Breast epithelium (tissue), 4 donors: ENCODE measurements at regions of chr11 and their contacts with region 1.

Region 1: DNA sequence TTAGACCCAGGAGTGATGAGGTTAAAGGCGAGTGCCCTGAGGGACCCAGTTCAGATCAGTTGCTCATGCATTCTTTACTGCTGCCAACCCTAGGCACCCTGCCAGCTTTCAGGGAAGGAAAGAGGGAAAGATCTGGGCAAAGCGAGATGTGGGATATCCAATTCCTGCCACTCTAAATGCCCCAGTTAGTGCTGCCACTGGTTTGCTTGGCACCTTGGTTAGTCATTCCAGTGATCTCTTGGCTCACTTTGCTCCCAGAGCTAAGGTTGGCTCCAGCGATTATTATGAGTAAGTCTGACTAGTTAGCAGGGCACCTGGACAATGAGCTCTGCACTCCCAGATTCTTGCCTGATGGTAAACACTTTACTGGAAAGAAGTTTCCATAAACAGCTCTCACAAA is 85.0 kb downstream of the INSC start:
- DNase-seq: peak; percentile 27 to 66
- H3K4me3 ChIP-seq: no peak overlapping the region
- H3K27ac ChIP-seq: no peak overlapping the region
- H3K4me1 ChIP-seq: no peaks in the 10 kb centered on the region
- H3K27me3 ChIP-seq: no peaks in the 10 kb centered on the region
- CTCF ChIP-seq: no peak
- POLR2A ChIP-seq: no peak

Region 2: DNA sequence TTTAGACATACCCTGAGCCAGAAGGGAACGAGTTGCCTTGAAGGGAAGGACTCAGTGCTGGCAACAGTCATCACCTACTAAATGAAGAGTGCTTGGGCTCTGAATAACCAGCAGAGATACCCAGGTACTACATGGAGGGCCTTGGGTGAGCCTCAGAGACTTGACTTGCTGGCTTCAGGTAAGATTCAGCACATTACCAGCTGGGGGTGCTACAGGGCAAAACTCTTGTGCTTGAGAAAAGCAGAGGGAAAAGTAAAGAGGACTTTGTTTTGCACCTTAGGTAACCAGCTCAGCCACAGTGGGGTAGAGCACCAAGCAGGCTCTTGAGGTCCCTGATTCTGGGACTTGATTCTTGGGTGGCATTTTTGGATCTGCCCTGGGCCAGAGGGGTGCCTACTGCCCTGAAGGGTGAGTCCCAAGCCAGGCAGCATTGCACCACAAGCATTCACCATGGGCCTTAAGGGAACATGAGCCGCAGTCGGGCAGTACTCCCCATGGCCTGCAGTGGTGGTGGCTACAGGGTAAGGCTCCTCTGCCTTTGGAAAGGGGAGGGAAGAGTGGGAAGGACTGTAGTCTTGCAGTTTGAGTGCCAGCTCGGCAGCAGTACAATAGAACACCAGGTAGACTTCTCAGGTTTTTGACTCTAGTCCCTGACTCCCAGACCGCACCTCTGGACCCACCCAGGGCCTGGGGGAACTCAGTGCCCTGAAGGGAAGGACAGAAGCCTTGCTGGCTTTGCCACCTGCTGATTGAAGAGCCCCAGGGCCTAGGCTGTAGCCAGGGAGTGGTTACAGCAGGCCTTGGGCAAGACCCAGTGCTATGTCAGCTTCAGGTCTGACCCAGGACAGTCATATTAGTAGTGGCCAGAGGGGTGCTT is 1837.2 kb after region 1 on chr11:
- intact Hi-C with region 1: loop called (anchors 5 kb)
- DNase-seq: no peak
- H3K4me3 ChIP-seq: no peak overlapping the region
- H3K27ac ChIP-seq: no peak overlapping the region
- H3K4me1 ChIP-seq: no peaks in the 10 kb centered on the region
- H3K27me3 ChIP-seq: no peaks in the 10 kb centered on the region
- CTCF ChIP-seq: no peak
- POLR2A ChIP-seq: no peak